A549 (cell line): ENCODE measurements at regions of chr1 and their contacts with region 1.

Region 1: GRCh38 chr1:36187800-36188593 is 32.0 kb downstream of the MAP7D1 start:
- DNase-seq: peak; percentile 81 to 88
- ATAC-seq: peak; percentile 96 to 98
- H3K4me3 ChIP-seq: no peak overlapping the region
- H3K27ac ChIP-seq: peak overlapping the region; percentile 88 to 90
- H3K4me1 ChIP-seq: peaks cover 8% of the 10 kb centered on the region
- CTCF ChIP-seq: peak; percentile 68
- EP300 ChIP-seq: no peak
- POLR2A ChIP-seq: no peak
- RAD21 ChIP-seq: peak; percentile 89 to 92

Region 2: GRCh38 chr1:36099681-36100341 is 88.2 kb before region 1 on chr1:
- CTCF ChIA-PET with region 1: interaction called, 16 read pairs
- POLR2A ChIA-PET with region 1: no interaction called
- DNase-seq: peak; percentile 65 to 69
- ATAC-seq: peak; percentile 84 to 92
- H3K4me3 ChIP-seq: no peak overlapping the region
- H3K27ac ChIP-seq: peak overlapping the region; percentile 51 to 80; a peak in 4 of 6 replicates
- H3K4me1 ChIP-seq: no peaks in the 10 kb centered on the region
- CTCF ChIP-seq: peak; percentile 86
- EP300 ChIP-seq: no peak
- POLR2A ChIP-seq: no peak
- RAD21 ChIP-seq: peak; percentile 88 to 92

Region 3: GRCh38 chr1:36155408-36156328 is 32.3 kb before region 1 on chr1 and contains the start of gene MAP7D1:
- CTCF ChIA-PET with region 1: interaction called, 114 read pairs
- POLR2A ChIA-PET with region 1: interaction called, 21 read pairs
- DNase-seq: peak; percentile 51 to 73
- ATAC-seq: peak; percentile 53 to 71
- H3K4me3 ChIP-seq: peak within 1 kb of the TSS; percentile 99
- H3K27ac ChIP-seq: peak within 1 kb of the TSS; percentile 98 to 99
- H3K4me1 ChIP-seq: peaks cover 54% of the 10 kb centered on the region
- CTCF ChIP-seq: no peak
- EP300 ChIP-seq: peak in 1 of 2 experiments; percentile 24; a peak in 1 of 5 replicates
- POLR2A ChIP-seq: peak; percentile 63
- RAD21 ChIP-seq: no peak
- polyA plus RNA-seq, gene MAP7D1: 15.4 and 16.4 TPM in 2 replicates

Region 4: DNA sequence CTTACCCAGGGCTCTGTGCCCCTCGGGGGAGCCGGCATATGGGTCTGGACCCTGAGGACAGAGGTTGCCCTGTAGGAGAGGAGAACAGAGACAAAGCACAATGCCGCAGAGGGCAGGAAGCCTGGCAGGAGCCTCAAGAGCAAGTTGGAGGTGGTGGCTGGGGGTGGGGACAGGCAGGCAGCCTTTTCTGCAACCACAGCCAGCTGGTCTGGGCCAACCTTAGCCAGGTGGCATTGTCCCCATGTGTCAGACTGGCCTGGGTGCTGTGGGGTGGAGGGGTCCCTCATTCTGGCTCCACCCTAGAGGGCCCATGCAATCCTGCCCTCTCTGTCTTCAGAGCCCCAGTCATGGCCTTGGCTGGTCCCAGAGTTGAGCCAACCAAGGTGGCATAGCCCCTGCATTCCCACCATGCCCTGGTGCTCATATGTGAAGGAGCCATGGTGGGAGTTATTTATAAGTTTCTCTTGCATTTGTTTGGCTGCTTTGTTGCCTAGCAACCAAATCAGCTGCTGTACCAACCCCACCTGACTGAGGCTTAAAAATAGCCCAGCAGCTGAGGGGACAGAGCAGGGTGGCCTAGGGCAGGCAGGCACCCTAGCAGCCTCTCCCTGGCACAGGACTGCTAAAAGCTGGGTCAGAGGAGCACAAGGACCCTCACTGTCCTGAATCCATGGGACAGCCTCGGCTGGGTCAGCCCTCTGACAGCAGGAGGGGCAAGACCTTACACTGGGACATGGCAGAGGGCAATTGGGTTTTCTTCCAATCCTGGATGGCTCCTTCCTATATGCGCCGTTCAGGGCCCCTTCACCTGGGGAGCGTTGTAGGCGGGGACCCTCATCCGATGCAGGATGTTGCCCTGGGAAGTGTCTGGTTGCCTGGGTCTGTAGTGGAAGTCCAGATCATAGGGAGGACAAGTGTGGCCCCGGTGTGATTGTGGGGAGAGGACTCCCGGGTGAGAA is 12.6 kb before region 1 on chr1:
- CTCF ChIA-PET with region 1: interaction called, 54 read pairs
- POLR2A ChIA-PET with region 1: no interaction called
- DNase-seq: no peak
- ATAC-seq: peak in 1 of 2 experiments; percentile 15; a peak in 2 of 6 replicates
- H3K4me3 ChIP-seq: no peak overlapping the region
- H3K27ac ChIP-seq: 0 out of 6 replicates have a peak overlapping the region, but pooled peaks of 1 of the 2 experiments have one; percentile 26
- H3K4me1 ChIP-seq: peaks cover 18% of the 10 kb centered on the region
- CTCF ChIP-seq: no peak
- EP300 ChIP-seq: no peak
- POLR2A ChIP-seq: no peak
- RAD21 ChIP-seq: no peak

Region 5: GRCh38 chr1:36207339-36207738 is 19.3 kb after region 1 on chr1:
- CTCF ChIA-PET with region 1: interaction called, 17 read pairs
- POLR2A ChIA-PET with region 1: no interaction called
- DNase-seq: peak in 1 of 2 experiments; percentile 57
- ATAC-seq: peak in 1 of 2 experiments; percentile 34; a peak in 3 of 6 replicates
- H3K4me3 ChIP-seq: no peak overlapping the region
- H3K27ac ChIP-seq: peak overlapping the region; percentile 60 to 74; a peak in 4 of 6 replicates
- H3K4me1 ChIP-seq: peaks cover 47% of the 10 kb centered on the region
- CTCF ChIP-seq: no peak
- EP300 ChIP-seq: no peak
- POLR2A ChIP-seq: no peak
- RAD21 ChIP-seq: no peak

Region 6: DNA sequence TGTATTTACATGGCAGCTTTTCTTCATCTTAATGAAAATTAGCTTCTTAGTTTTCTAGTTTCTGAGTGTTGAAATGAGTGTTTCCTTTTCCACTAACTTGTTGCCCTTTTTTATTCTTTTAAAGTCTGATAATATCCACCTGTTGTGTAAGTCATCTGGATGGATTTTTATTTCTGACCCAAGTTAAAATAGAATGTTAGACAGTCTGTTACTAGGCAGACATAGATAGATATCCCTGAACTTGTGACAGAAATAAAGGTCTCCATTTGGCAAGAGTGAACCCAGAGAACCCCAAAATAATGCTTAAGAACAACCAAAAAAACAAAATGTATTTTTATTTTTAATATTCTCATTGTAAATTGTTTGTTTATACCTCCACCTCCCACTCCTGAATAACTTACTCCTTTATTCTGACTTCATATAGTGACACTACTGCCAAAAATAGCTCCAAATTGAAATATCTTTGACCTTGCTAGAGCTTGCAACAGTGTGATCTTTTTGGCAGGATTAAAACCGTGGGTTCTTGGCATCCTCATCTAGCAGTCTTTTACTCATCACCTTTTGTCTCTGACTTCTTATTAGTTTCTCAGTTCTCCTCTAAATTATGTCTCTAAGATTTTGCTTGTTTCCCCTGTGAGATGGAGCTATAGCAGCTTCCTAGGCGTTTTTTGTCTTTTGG is 91.3 kb after region 1 on chr1:
- CTCF ChIA-PET with region 1: interaction called, 12 read pairs
- POLR2A ChIA-PET with region 1: no interaction called
- DNase-seq: no peak
- ATAC-seq: no peak
- H3K4me3 ChIP-seq: no peak overlapping the region
- H3K27ac ChIP-seq: no peak overlapping the region
- H3K4me1 ChIP-seq: peaks cover 29% of the 10 kb centered on the region; the same call in 2 of the 3 replicates
- CTCF ChIP-seq: no peak
- EP300 ChIP-seq: no peak
- POLR2A ChIP-seq: no peak
- RAD21 ChIP-seq: no peak